ENCODE measurements at regions of chr19 and their contacts with region 1.

Region 1: GRCh38 chr19:4669723-4670480 is at the start of gene MYDGF:
- DNase-seq: peak; percentile 90
- ATAC-seq: peak; percentile 83 to 86
- H3K4me3 ChIP-seq: peak within 1 kb of the TSS; percentile 84 to 96 (median 90)
- H3K27ac ChIP-seq: peak within 1 kb of the TSS; percentile 90 to 95 (median 92)
- H3K4me1 ChIP-seq: peaks cover 21 to 24% of the 10 kb centered on the region in 2 donors
- H3K27me3 ChIP-seq: no peaks in the 10 kb centered on the region
- CTCF ChIP-seq: no peak
- POLR2A ChIP-seq: peak; percentile 47 to 77
- total RNA-seq, gene MYDGF: 8.0 to 12.9 (median 10.1) TPM

Region 2: DNA sequence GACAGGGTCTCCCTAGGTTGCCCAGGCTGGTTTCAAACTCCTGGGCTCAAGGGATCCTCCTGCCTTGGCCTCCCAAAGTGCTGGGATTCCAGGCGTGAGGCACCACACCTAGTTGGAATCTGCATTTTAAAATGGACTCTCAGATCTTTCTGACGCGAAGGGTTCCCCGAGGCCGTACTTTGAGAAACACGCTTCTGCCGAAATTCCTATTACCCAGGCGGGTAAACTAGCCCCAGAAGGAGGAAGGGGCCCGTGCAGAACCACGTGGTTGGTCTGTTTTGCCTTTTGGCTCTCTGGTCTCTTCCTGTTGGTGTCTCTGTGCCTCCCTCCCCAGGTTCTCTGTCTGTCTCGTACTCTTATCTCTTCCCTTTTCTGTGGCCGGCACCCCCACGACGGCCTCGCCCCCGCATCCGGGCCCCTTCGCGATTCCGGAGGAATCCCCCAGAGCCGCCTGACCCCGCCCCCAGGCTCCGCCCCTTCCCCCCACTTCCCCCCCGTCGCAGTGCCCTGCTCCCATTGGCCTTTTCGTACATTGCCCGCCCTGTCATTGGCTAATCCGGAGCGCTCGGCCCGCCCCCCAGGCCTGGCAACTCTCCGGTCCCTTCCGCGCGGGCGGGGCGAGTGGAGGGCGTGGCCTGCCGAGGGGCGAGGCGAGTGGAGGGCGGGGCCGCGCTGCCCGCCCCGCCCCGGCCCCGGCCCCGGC is 30.9 kb before region 1 on chr19 and contains the start of gene TNFAIP8L1:
- in situ Hi-C with region 1: no loop called
- intact Hi-C with region 1: no loop called
- DNase-seq: peak; percentile 93 to 94
- ATAC-seq: peak; percentile 92 to 95
- H3K4me3 ChIP-seq: peak within 1 kb of the TSS; percentile 62 to 82 (median 77)
- H3K27ac ChIP-seq: peak within 1 kb of the TSS; percentile 79 to 83 (median 80)
- H3K4me1 ChIP-seq: peaks cover 26 to 28% of the 10 kb centered on the region in 2 donors
- H3K27me3 ChIP-seq: no peaks in the 10 kb centered on the region
- CTCF ChIP-seq: no peak
- POLR2A ChIP-seq: no peak
- total RNA-seq, gene TNFAIP8L1: 1.3 to 2.9 (median 1.7) TPM

Region 3: GRCh38 chr19:4723367-4724187 is 53.7 kb after region 1 on chr19 and contains the start of gene DPP9:
- in situ Hi-C with region 1: no loop called
- intact Hi-C with region 1: loop called (anchors 2 kb)
- DNase-seq: peak; percentile 97 to 99
- ATAC-seq: peak; percentile 92 to 94
- H3K4me3 ChIP-seq: peak within 1 kb of the TSS; percentile 76 to 100 (median 94)
- H3K27ac ChIP-seq: peak within 1 kb of the TSS; percentile 79 to 99 (median 96)
- H3K4me1 ChIP-seq: peaks cover 12 to 18% of the 10 kb centered on the region in 2 donors
- H3K27me3 ChIP-seq: no peaks in the 10 kb centered on the region
- CTCF ChIP-seq: peak in 4 of 5 experiments; percentile 18 to 68 (median 38)
- POLR2A ChIP-seq: peak; percentile 93 to 97
- total RNA-seq, gene DPP9: 92.6 to 208 (median 148) TPM

Measured in gastrocnemius medialis (tissue), 4 donors.